ENCODE measurements at regions of chr9 and their contacts with region 1.

Region 1: DNA sequence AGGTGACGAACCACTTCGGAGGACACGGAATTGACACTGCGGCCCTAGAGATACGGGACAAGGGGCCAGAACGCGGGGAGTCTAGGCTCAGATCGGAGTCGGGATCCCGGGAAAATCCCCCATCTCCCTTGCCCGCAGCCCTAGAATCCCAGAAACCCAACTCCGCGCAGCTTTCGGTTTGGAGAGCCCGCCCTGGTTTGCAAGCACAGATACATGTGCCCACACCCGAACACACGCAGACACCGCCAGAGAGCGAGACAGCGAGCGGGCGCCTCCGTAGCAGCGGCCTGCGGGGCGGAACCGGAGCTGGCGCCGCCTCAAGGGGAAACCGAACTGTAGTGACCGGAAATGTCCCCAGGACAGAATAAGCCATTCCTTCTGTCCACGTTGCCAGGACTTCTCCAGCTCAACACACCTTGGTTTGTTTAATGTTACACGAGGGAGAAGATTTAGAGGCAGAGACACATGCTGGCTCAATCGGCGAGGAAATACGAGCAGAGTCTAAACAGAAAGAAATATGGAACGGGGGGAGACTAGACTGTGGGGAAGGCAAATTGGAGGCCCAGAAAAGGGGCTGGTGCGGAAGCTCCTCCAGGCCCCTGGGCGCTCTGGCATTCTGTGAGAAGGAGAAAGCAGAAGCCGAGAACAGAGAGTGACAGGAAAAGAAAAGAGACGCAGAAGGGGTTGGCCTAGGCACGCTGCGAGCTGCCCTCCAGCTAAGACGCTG is 2.9 kb upstream of the PAX5 start:
- DNase-seq: peak; percentile 59
- ATAC-seq: peak; percentile 22
- H3K4me3 Mint-ChIP-seq: peak overlapping the region; percentile 74
- H3K27ac Mint-ChIP-seq: no peak overlapping the region
- H3K4me1 Mint-ChIP-seq: peaks cover 50% of the 10 kb centered on the region
- H3K27me3 Mint-ChIP-seq: peaks cover 98% of the 10 kb centered on the region
- CTCF ChIP-seq: no peak

Region 2: GRCh38 chr9:36980148-36980974 is 56.6 kb before region 1 on chr9:
- CTCF ChIA-PET with region 1: interaction called, 15 read pairs
- POLR2A ChIA-PET with region 1: no interaction called
- DNase-seq: peak; percentile 75
- ATAC-seq: peak; percentile 97
- H3K4me3 Mint-ChIP-seq: no peak overlapping the region
- H3K27ac Mint-ChIP-seq: no peak overlapping the region
- H3K4me1 Mint-ChIP-seq: peaks cover 24% of the 10 kb centered on the region
- H3K27me3 Mint-ChIP-seq: peaks cover 43% of the 10 kb centered on the region
- CTCF ChIP-seq: no peak

Measured in WTC11 (cell line).